MCF 10A (cell line): ENCODE measurements at regions of chr13 and their contacts with region 1.

Region 1: GRCh38 chr13:42883771-42884467 is 102.5 kb downstream of the FAM216B start:
- DNase-seq: peak; percentile 62
- H3K4me3 Mint-ChIP-seq: no peak overlapping the region
- H3K27ac Mint-ChIP-seq: no peak overlapping the region
- H3K4me1 Mint-ChIP-seq: peaks cover 22% of the 10 kb centered on the region
- H3K27me3 Mint-ChIP-seq: no peaks in the 10 kb centered on the region
- CTCF ChIP-seq: peak; percentile 46

Region 2: DNA sequence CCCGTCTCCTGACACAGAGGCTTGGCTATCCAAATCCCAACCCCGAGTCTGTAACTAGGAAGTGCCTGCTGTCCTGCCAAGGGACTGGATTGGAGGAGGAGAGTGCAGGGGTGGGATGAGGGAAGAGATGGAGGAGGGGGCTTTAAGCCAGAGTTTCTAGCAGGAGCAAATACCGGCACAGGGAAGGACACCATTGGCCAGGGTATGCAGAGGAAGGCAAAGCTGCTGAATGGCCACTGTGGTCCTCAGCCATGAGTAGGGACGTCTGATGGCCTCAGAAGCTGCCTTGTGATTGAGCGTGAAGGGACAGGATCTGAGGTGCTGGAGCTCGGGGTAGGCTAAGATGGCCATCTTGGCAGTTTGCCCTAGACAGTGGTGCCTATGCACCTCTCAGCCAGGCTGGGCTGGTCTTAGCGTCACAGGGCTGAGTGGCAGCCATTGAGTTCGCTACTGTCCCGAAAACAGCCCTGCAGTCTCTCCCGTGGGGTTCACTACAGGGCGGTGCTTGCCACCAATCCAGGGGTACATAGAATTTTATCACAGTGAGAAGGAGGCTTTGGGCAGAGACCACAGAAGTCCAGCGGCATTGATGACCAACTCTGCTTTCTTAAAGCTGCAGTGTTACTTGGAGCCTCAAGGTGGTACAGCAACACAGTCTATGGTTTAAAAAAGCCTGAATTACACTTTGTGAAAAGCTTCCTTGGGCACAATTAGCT is 550.1 kb before region 1 on chr13:
- CTCF ChIA-PET with region 1: no interaction called
- POLR2A ChIA-PET with region 1: no interaction called
- intact Hi-C with region 1: loop called (anchors 10 kb)
- DNase-seq: peak; percentile 45
- H3K4me3 Mint-ChIP-seq: no peak overlapping the region
- H3K27ac Mint-ChIP-seq: no peak overlapping the region
- H3K4me1 Mint-ChIP-seq: peaks cover 5% of the 10 kb centered on the region
- H3K27me3 Mint-ChIP-seq: no peaks in the 10 kb centered on the region
- CTCF ChIP-seq: peak; percentile 49

Region 3: DNA sequence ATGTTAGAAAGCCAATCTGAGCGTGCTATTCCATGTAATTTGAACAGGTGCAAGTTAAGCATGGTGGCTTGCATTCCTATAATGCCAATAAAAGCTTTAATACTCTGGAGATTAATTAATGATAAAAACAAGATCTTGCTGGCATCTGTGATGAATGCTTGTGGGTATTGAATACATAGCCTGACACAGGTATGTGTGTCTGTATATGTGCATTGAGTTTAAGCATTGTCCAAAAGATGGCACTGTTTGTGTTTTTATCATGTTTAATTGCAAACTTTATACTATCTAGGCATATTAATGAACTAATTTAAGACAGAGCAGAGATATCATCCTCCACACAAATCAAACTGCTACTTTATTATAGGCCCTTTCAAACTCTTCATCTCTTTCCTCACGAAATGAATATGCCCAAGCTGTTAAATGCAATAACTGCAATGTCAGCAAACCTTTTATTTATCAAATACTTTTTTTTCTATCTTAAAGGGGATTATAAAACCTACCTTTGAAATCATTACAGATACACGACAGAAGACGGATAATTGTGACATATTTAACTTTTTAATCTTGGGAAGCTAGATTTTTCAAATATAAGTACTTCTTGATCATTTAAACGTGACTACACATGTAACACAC is 223.5 kb before region 1 on chr13:
- CTCF ChIA-PET with region 1: interaction called, 7 read pairs
- POLR2A ChIA-PET with region 1: no interaction called
- intact Hi-C with region 1: loop called (anchors 2 kb)
- DNase-seq: peak; percentile 31
- H3K4me3 Mint-ChIP-seq: no peak overlapping the region
- H3K27ac Mint-ChIP-seq: no peak overlapping the region
- H3K4me1 Mint-ChIP-seq: no peaks in the 10 kb centered on the region
- H3K27me3 Mint-ChIP-seq: peaks cover 39% of the 10 kb centered on the region
- CTCF ChIP-seq: peak; percentile 35

Region 4: DNA sequence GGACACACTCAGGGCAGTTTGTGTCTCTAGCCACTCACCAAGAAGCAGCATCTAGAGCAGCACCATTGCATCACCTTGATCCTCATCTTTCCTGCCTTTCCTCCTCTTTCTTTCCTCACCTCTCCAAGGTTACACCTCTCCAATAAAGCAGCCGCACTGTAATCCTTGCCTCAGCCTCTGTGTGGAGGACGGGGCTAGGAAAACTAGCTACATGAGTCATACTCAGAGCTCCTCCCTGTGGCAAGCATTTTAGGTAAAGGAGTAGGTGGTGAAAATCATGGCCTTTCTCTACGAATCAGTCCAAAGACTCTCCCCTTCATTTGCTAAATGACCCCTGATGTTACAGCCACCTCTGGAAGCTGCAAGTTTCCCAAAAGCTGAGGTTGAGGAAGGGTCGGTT is 248.3 kb after region 1 on chr13:
- CTCF ChIA-PET with region 1: no interaction called
- POLR2A ChIA-PET with region 1: no interaction called
- intact Hi-C with region 1: loop called (anchors 2 kb)
- DNase-seq: peak; percentile 82
- H3K4me3 Mint-ChIP-seq: no peak overlapping the region
- H3K27ac Mint-ChIP-seq: no peak overlapping the region
- H3K4me1 Mint-ChIP-seq: peaks cover 13% of the 10 kb centered on the region
- H3K27me3 Mint-ChIP-seq: no peaks in the 10 kb centered on the region
- CTCF ChIP-seq: peak; percentile 36

Region 5: DNA sequence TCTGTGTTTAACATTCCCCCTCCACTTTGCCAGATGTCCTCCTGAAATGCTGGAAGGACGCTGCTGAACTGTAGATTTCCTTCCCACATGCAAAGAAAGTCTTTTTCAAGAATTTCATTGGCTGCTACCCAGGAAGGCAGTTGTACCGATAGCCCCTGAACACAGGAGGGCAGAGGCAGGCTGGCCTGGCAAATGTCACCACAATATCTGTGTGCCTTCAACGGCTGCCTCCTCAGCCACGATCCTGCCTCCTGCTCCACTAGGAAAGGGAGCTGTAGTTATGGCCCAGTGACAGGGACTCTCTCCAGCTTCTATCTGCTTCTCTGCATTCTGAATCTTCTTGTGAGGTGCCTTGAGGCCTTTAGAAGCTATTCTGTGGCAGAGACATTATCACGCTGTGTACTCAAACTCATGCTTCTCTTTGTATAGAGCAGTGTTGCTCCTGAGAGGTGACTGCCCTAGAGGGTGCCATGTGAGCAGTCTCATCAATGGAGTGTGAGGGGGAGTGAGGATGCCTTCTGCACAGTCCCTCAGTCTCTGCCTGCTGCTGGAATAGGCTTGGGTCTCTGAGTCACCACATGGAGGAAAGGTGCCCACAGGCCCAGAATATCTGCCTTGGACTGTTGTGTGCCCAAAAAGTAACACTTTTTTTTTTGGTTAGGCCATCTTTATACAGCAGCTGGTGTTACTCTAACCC is 419.3 kb after region 1 on chr13:
- CTCF ChIA-PET with region 1: no interaction called
- POLR2A ChIA-PET with region 1: no interaction called
- intact Hi-C with region 1: loop called (anchors 10 kb)
- DNase-seq: peak; percentile 35
- H3K4me3 Mint-ChIP-seq: no peak overlapping the region
- H3K27ac Mint-ChIP-seq: no peak overlapping the region
- H3K4me1 Mint-ChIP-seq: peaks cover 42% of the 10 kb centered on the region
- H3K27me3 Mint-ChIP-seq: no peaks in the 10 kb centered on the region
- CTCF ChIP-seq: peak; percentile 27

Region 6: DNA sequence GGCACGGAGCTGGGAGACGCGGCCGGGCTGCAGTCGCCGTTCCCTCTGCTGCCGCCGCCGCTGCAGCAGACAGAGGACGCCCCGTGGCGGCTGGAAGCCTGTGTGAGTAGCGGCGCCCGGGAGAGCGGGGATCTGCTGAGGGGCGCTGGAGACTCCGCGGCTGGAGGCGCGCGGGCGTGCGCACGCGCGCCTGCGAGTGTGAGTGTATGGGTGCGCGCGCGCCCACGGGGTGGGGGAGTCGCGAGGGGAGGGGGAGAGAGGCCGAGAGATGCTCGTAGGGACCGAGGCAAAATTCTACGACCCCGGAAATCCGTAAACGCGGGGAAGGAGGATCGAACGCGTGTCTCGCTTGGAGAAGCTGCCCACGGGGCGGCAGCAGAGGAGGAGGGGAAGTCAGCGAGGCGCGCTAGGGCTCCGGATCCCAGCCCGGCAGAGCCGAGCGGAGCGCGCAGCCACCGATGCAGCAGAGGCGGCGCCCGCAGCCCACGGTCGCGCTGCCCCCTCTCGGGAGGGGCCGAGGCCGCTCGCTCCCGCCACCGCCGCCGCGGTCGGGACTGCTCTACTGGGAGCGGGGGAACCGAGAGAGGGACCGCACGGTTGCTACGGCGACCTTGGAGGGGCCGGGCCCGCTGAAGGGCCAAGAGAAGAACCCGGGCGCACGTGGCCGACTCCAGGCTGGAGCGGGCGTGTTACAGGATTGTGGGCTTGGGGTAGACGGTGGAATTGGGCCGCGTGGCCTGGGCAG is 903.0 kb after region 1 on chr13 and contains the start of gene ENOX1:
- CTCF ChIA-PET with region 1: no interaction called
- POLR2A ChIA-PET with region 1: no interaction called
- intact Hi-C with region 1: loop called (anchors 1 kb)
- DNase-seq: peak; percentile 60
- H3K4me3 Mint-ChIP-seq: peak within 1 kb of the TSS; percentile 80
- H3K27ac Mint-ChIP-seq: peak within 1 kb of the TSS; percentile 23
- H3K4me1 Mint-ChIP-seq: peaks cover 20% of the 10 kb centered on the region
- H3K27me3 Mint-ChIP-seq: no peaks in the 10 kb centered on the region
- CTCF ChIP-seq: peak; percentile 12
- total RNA-seq, gene ENOX1: 1.5 and 1.8 TPM in 2 replicates

Region 7: DNA sequence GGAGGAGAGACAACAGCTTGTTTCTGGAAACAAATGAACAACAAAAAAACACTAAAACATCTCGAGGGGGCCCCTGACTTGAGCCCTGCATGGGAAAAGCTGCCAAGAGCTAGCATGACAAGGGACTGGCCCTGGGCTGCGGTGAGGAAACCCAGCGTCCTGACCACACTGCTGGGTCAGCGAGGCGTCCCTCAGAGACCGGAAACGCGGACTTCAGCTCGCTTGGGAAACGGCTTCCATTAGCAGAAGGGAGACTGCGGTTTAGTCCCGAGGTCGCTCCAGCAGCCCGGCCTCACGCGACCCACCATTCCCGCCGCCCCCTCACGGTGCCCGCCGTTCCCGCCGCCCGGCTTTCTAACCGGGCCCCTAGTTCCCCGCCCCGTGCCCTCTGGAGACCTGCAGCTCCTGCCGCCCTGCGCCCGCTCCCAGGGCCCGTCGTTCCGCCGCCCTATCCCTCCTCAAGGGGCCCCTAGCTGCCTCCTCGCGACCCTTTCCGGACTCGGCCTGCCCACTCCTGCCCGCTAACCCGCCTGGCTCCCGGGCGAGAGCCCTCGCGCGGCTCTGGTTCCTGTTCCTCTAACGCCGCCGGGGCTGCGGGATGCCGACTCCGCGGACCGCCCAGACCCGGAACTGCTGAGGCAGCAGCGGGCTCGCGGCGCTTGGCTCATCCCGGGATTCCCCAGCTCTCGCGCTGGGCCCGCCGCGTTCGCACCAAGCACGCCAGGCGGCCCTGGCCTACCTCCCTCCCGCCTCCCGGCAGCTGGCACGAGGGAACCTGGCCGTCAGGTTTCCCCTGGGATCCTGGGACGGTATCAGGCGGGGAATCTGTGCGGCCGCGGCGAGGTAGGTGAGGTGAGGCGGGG is 995.2 kb after region 1 on chr13 and contains the start of gene CCDC122:
- CTCF ChIA-PET with region 1: no interaction called
- POLR2A ChIA-PET with region 1: interaction called, 3 read pairs
- intact Hi-C with region 1: loop called (anchors 1 kb)
- DNase-seq: peak; percentile 83
- H3K4me3 Mint-ChIP-seq: peak within 1 kb of the TSS; percentile 93
- H3K27ac Mint-ChIP-seq: peak within 1 kb of the TSS; percentile 98
- H3K4me1 Mint-ChIP-seq: peaks cover 23% of the 10 kb centered on the region
- H3K27me3 Mint-ChIP-seq: no peaks in the 10 kb centered on the region
- CTCF ChIP-seq: no peak
- total RNA-seq, gene CCDC122: 15.7 and 16.3 TPM in 2 replicates